ENCODE measurements at regions of chr3 and their contacts with region 1.

Region 1: DNA sequence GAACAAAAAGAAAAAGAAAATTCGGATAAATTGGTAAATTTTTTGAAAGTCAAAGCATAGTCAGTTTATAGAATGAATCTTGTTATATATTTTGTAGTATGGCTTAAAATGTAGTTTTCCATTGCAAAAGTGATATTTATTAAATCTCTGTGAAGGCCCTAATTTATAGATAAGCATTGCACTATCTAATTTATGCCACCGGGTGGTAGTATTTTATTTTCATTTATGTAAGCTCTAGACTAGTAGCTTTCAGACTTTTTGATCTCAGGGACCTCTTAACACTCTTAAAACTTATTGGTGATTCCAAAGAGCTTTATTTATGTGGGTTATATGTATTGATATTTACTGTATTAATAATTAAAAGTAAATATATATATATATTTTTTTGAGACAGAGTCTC is 133.9 kb upstream of the LRRFIP2 start:
- DNase-seq: peak; percentile 11
- H3K4me3 ChIP-seq: no peak overlapping the region
- H3K27ac ChIP-seq: no peak overlapping the region
- H3K4me1 ChIP-seq: no peaks in the 10 kb centered on the region
- H3K27me3 ChIP-seq: no peaks in the 10 kb centered on the region
- CTCF ChIP-seq: peak in 1 of 2 donors; percentile 21

Region 2: GRCh38 chr3:37029111-37029510 is 279.1 kb before region 1 on chr3:
- CTCF ChIA-PET with region 1: interaction called, 16 read pairs
- dilution Hi-C with region 1: no loop called
- in situ Hi-C with region 1: no loop called
- intact Hi-C with region 1: no loop called
- DNase-seq: no peak
- H3K4me3 ChIP-seq: no peak overlapping the region
- H3K27ac ChIP-seq: no peak overlapping the region
- H3K4me1 ChIP-seq: peaks cover 15% of the 10 kb centered on the region
- H3K27me3 ChIP-seq: no peaks in the 10 kb centered on the region
- CTCF ChIP-seq: no peak

Measured in mammary epithelial cell (primary cell).